PC-9 (cell line): ENCODE measurements at regions of chr6 and their contacts with region 1.

Region 1: DNA sequence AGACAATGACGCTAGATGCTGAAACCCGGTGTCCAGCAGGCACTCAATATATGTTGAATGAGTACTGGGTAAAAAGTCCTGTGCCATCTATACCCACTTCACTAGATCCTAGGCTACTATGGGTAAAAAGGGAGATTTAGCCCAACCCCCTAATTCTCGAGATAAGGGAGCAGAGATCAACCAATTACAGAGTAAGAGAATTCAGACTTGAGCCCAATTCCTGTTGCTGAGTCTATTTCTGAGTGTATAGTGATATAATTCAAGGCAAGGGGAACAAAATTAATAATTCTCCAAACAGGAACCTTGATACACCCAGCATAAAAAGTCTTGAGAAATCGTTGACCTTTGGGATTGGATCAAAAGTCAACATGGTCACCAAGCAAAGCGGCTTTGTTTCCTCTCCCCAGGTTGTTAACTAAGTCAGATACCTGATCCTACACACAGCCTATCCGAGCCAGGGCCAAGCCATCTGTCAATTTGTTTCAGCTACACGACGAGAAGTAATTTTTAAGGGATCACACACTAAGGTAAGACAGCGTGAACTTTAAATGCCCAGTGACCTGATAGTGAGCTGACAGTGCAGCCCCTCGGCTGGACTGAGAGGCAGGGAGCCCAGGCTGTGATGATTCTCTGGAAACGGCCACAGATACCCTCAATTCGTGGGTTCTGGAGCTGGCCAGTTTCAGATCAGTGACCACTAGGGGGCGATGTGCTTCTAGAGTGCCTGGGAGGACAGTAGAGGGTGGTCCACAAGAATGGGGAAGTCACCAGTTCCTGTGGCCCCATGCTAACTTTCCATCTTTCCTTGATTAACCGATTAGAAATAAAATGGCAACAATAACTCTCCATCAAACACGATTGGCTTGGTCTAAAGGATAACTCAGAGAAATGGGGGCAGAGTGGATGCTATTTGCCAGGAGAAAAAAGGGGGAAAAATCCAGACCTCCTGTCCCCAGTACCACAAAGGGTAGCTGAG is 46.2 kb downstream of the SLC22A23 start:
- DNase-seq: peak in 1 of 2 experiments; percentile 24
- H3K4me3 ChIP-seq: no peak overlapping the region
- H3K27ac ChIP-seq: no peak overlapping the region
- H3K4me1 ChIP-seq: peaks cover 42% of the 10 kb centered on the region
- H3K27me3 ChIP-seq: no peaks in the 10 kb centered on the region
- CTCF ChIP-seq: peak; percentile 71

Region 2: DNA sequence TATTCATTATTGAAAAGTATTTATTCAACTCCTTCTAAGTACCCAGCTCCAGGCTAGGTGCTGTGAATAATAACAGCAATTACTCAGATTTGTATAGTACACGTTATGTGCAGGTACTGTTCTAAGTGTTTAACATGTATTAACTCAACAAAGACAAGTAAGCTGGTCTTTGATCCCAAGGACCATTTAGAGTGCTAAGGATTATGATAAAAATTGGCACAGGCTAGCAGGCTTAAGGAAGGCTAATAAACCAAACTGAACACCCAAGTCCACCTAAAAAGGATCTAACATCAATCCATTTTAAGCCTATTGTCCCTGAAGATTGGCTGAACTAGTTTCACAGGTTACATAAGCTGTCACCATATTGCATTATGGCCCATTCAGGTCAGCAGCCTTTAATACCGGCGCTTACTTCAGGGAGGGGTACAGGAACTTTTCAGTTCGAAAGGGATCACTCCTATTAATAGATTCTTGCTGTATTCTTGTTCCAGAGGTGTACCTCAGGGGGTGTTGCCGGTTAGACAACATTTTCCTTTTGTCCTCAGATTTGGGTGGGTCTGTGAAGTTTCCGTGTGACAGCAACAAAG is 1066.3 kb before region 1 on chr6:
- CTCF ChIA-PET with region 1: no interaction called
- POLR2A ChIA-PET with region 1: no interaction called
- intact Hi-C with region 1: no loop called
- DNase-seq: no peak
- H3K4me3 ChIP-seq: no peak overlapping the region
- H3K27ac ChIP-seq: no peak overlapping the region
- H3K4me1 ChIP-seq: no peaks in the 10 kb centered on the region
- H3K27me3 ChIP-seq: no peaks in the 10 kb centered on the region
- CTCF ChIP-seq: no peak

Region 3: GRCh38 chr6:3231247-3232016 is 179.2 kb before region 1 on chr6:
- CTCF ChIA-PET with region 1: no interaction called
- POLR2A ChIA-PET with region 1: no interaction called
- intact Hi-C with region 1: no loop called
- DNase-seq: peak in 1 of 2 experiments; percentile 16
- H3K4me3 ChIP-seq: no peak overlapping the region
- H3K27ac ChIP-seq: no peak overlapping the region
- H3K4me1 ChIP-seq: 0 out of 2 replicates have a peak, but pooled peaks cover 4% of the 10 kb centered on the region
- H3K27me3 ChIP-seq: no peaks in the 10 kb centered on the region
- CTCF ChIP-seq: no peak

Region 4: DNA sequence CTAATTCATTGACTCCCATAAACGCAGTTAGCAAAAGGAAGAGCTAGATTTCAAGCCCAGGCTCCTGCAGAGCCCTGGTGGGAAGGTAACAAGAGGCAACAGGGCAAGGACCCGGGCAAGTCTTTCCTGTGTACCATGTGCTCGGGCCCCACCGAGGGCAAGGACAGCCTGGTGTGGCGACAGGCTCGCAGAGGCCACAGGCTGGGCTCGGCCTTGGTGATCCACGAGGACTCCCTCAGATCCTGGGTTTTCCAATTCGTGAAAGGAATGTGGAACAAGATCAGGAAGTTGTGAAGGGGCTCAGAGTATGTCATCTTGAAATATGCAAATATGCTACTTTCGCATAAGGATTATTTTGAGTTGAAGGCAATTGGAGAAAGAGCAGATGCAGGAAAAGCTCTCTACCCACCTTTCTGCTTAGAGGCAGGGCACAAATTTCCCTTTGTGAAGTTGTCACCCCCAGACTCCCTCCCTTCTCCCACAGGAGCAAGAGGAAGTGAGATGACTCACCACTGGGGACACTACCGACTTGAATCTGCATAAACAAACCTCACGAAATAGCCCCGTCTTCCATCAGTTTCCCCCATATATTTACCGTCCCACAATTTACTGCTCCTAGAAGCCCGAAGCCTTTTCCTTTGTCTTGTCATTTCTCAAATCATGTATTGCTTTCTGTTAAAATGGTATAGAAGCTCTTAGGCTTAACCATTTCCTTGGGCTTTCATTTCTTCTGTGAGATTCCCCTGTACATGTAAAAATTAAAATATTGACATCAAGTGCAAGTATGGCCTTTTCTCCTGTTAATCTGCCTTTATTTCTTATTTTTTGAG is 72.9 kb before region 1 on chr6:
- CTCF ChIA-PET with region 1: no interaction called
- POLR2A ChIA-PET with region 1: no interaction called
- intact Hi-C with region 1: no loop called
- DNase-seq: peak in 1 of 2 experiments; percentile 18
- H3K4me3 ChIP-seq: no peak overlapping the region
- H3K27ac ChIP-seq: no peak overlapping the region
- H3K4me1 ChIP-seq: peaks cover 8% of the 10 kb centered on the region
- H3K27me3 ChIP-seq: no peaks in the 10 kb centered on the region
- CTCF ChIP-seq: no peak

Region 5: GRCh38 chr6:3356056-3356761 is 54.5 kb before region 1 on chr6:
- CTCF ChIA-PET with region 1: no interaction called
- POLR2A ChIA-PET with region 1: interaction called, 4 read pairs
- intact Hi-C with region 1: loop called (anchors 1 kb)
- DNase-seq: peak; percentile 64 to 71
- H3K4me3 ChIP-seq: peak overlapping the region; percentile 56
- H3K27ac ChIP-seq: peak overlapping the region; percentile 61
- H3K4me1 ChIP-seq: peaks cover 29% of the 10 kb centered on the region
- H3K27me3 ChIP-seq: no peaks in the 10 kb centered on the region
- CTCF ChIP-seq: no peak

Region 6: DNA sequence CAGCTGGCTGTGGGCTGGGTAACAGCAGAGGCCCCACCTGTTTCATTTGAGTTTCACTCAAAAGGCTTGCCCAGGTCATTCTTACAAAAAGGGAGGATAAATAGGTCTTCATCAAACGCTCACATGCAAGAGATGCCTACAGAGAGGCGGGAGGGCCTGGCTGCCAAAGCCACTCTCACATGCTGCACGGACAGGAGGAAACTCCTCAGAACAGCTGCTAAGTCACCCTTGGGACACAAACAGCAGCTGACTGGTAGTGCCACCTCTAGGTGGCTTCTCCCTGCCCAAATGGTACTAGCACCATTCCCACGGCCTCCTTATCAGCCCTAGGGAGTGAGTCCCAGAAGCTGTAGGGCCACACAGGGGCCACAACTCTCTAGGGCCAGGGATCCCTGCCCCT is 22.3 kb after region 1 on chr6:
- CTCF ChIA-PET with region 1: interaction called, 18 read pairs
- POLR2A ChIA-PET with region 1: no interaction called
- intact Hi-C with region 1: no loop called
- DNase-seq: peak in 1 of 2 experiments; percentile 17
- H3K4me3 ChIP-seq: no peak overlapping the region
- H3K27ac ChIP-seq: no peak overlapping the region
- H3K4me1 ChIP-seq: no peaks in the 10 kb centered on the region
- H3K27me3 ChIP-seq: no peaks in the 10 kb centered on the region
- CTCF ChIP-seq: no peak

Region 7: DNA sequence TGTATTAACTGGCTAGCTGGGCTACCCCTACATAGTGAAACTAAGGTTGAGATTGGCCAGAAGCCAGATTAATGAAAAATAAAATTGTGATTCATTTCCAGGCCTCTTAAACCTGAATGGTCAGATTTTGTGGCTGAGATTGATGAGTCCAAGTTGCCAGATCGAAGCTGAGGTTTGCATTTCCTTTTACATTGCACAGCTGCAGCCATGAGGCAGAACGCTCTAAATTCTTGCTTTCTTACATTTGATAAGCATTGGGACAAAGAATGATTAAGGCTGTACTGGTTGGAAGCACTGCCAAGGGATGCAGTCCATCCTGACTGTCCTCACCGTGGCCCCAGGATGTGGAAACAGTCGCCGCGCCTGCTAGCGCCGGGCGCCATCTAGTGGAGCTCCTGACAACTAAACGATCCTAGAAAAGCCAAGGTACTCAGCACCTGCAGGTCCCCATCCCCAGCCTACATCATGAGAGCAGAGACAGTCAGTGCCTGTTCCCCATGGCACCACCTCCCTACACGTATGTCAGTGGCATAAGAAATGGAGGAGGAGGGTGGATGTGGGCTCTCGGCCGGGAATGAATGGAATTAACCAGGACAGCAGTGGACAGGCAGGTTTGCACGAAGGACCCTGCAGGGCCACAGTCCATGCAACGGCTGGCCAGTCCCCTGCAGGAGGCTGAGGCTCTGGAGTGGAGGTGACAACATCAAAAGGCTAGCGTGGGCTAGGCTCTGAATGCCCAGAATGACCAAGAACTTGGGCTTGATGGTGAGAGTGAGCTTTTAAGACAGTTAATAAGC is 321.9 kb after region 1 on chr6:
- CTCF ChIA-PET with region 1: no interaction called
- POLR2A ChIA-PET with region 1: no interaction called
- intact Hi-C with region 1: loop called (anchors 5 kb)
- DNase-seq: peak; percentile 55 to 72
- H3K4me3 ChIP-seq: no peak overlapping the region
- H3K27ac ChIP-seq: no peak overlapping the region
- H3K4me1 ChIP-seq: no peaks in the 10 kb centered on the region
- H3K27me3 ChIP-seq: no peaks in the 10 kb centered on the region
- CTCF ChIP-seq: peak; percentile 86